Activated naive CD4-positive, alpha-beta T cell treated with anti-CD3 and anti-CD28 coated beads for 36 hours (primary cell): ENCODE measurements at regions of chr11 and their contacts with region 1.

Region 1: GRCh38 chr11:5808500-5809121 is at the start of gene OR52N2:
- DNase-seq: peak; percentile 86
- H3K4me3 Mint-ChIP-seq: peak within 1 kb of the TSS; percentile 89
- H3K27ac Mint-ChIP-seq: peak within 1 kb of the TSS; percentile 67
- H3K4me1 Mint-ChIP-seq: peaks cover 8% of the 10 kb centered on the region
- H3K27me3 Mint-ChIP-seq: peaks cover 5% of the 10 kb centered on the region
- total RNA-seq, gene OR52N2: not detected

Region 2: DNA sequence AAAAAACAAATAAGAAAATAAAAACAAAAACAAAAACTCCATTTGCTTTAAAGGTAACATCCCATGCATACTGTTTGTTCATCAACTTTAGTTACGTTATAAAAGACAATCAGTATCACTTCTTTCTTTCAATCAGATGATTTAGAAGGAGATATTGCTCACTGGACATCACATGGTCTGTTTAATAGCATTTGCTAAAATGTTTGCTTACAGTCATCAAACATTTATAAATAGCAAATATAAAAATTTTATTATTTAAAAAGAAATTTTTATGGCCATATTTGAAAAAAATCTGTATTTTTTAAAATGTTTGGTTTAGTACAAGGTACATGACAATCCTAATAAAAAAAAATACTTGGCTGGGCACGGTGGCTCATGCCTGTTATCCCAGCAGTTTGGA is 1081.4 kb before region 1 on chr11:
- CTCF ChIA-PET with region 1: no interaction called
- intact Hi-C with region 1: no loop called
- DNase-seq: no peak
- H3K4me3 Mint-ChIP-seq: no peak overlapping the region
- H3K27ac Mint-ChIP-seq: no peak overlapping the region
- H3K4me1 Mint-ChIP-seq: no peaks in the 10 kb centered on the region
- H3K27me3 Mint-ChIP-seq: peaks cover 6% of the 10 kb centered on the region

Region 3: GRCh38 chr11:5123802-5124521 is 684.6 kb before region 1 on chr11:
- CTCF ChIA-PET with region 1: interaction called, 3 read pairs
- intact Hi-C with region 1: loop called (anchors 1 kb)
- DNase-seq: peak; percentile 74
- H3K4me3 Mint-ChIP-seq: no peak overlapping the region
- H3K27ac Mint-ChIP-seq: no peak overlapping the region
- H3K4me1 Mint-ChIP-seq: no peaks in the 10 kb centered on the region
- H3K27me3 Mint-ChIP-seq: peaks cover 22% of the 10 kb centered on the region

Region 4: DNA sequence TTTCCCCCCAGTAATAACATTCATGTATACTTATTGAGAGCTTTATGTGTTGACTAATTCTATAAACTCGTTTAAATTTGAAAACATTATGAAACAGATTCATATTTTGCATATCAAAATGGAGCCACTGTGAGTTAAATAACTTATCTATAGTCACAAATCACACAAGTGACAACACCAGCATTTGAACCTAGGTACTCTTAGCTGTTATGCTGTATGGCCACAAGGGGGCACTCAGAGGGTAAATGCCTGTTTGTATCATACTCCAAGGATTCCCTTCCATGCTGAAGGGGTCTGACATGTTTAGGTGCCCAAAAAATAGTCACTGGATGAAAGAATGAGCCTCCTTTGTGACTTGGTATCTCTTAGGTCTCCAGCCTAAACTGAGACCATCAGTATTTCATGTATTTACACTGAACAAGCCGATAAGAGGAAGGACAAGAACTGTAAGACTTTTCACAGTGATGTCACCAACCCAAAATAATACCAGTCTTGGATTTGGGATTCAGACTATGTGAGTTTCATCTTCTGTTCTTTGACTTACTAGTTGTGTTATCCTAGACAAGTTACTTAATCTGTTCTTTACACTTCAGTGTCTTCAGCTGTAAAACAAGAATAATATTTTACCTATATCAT is 332.3 kb before region 1 on chr11:
- CTCF ChIA-PET with region 1: interaction called, 10 read pairs
- intact Hi-C with region 1: loop called (anchors 1 kb)
- DNase-seq: peak; percentile 64
- H3K4me3 Mint-ChIP-seq: no peak overlapping the region
- H3K27ac Mint-ChIP-seq: no peak overlapping the region
- H3K4me1 Mint-ChIP-seq: no peaks in the 10 kb centered on the region
- H3K27me3 Mint-ChIP-seq: peaks cover 11% of the 10 kb centered on the region

Region 5: GRCh38 chr11:5624489-5625279 is 183.9 kb before region 1 on chr11 and contains the start of gene TRIM34:
- CTCF ChIA-PET with region 1: interaction called, 3 read pairs
- intact Hi-C with region 1: loop called (anchors 2 kb)
- DNase-seq: peak; percentile 73
- H3K4me3 Mint-ChIP-seq: peak within 1 kb of the TSS; percentile 87
- H3K27ac Mint-ChIP-seq: peak within 1 kb of the TSS; percentile 88
- H3K4me1 Mint-ChIP-seq: peaks cover 31% of the 10 kb centered on the region
- H3K27me3 Mint-ChIP-seq: no peaks in the 10 kb centered on the region
- total RNA-seq, gene TRIM34: 12.8 to 12.9 TPM

Region 6: DNA sequence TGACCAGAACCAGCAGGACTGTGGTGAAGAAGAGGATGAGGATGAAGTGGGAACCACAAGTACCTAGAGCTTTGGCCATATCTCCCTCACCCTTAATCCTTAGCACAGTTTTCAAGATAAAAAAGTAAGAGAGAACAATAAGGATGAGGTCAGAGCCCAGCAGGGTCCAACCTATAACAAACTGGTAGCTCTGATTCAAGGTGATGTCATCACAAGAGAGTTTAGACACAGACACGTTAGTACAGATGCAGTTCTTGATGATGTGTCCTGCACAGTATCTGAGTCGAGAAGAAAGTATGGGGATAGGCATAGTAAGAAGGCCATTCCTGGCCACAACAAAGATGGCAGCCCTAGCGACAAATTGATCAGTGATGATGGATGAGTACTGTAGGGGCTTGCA is 159.1 kb after region 1 on chr11:
- CTCF ChIA-PET with region 1: no interaction called
- intact Hi-C with region 1: no loop called
- DNase-seq: no peak
- H3K4me3 Mint-ChIP-seq: no peak overlapping the region
- H3K27ac Mint-ChIP-seq: no peak overlapping the region
- H3K4me1 Mint-ChIP-seq: no peaks in the 10 kb centered on the region
- H3K27me3 Mint-ChIP-seq: peaks cover 11% of the 10 kb centered on the region

Region 7: DNA sequence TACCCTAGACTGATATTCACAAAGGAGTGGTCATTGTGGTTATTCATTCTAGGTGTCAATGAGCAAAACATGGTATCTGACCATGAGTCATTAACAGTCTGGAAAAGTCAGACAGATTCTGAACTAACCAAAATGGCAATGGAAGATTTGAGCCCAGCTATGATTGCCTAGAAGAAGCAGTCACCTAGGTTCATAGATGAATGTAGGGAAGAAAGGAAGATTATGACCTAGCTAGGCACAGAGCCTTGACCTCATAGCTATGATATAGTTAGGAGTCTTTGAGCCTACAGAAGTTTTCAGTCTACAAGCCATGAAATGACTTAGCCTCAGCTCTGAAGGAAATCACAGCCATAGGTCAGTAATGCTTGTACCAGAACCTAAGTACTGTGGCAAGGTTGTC is 197.8 kb after region 1 on chr11:
- CTCF ChIA-PET with region 1: no interaction called
- intact Hi-C with region 1: no loop called
- DNase-seq: no peak
- H3K4me3 Mint-ChIP-seq: no peak overlapping the region
- H3K27ac Mint-ChIP-seq: no peak overlapping the region
- H3K4me1 Mint-ChIP-seq: no peaks in the 10 kb centered on the region
- H3K27me3 Mint-ChIP-seq: peaks cover 19% of the 10 kb centered on the region